ENCODE measurements at regions of chr11 and their contacts with region 1.

Region 1: GRCh38 chr11:14454861-14455632 is 44.6 kb downstream of the COPB1 start:
- DNase-seq: peak; percentile 60
- ATAC-seq: no peak
- H3K4me3 ChIP-seq: no peak overlapping the region
- H3K4me3 Mint-ChIP-seq: no peak overlapping the region
- H3K27ac ChIP-seq: no peak overlapping the region
- H3K27ac Mint-ChIP-seq: no peak overlapping the region
- H3K4me1 ChIP-seq: peaks cover 9 to 15% of the 10 kb centered on the region in 2 donors
- H3K4me1 Mint-ChIP-seq: peaks cover 24% of the 10 kb centered on the region
- H3K27me3 ChIP-seq: no peaks in the 10 kb centered on the region
- H3K27me3 Mint-ChIP-seq: no peaks in the 10 kb centered on the region
- CTCF ChIP-seq: peak; percentile 88

Region 2: DNA sequence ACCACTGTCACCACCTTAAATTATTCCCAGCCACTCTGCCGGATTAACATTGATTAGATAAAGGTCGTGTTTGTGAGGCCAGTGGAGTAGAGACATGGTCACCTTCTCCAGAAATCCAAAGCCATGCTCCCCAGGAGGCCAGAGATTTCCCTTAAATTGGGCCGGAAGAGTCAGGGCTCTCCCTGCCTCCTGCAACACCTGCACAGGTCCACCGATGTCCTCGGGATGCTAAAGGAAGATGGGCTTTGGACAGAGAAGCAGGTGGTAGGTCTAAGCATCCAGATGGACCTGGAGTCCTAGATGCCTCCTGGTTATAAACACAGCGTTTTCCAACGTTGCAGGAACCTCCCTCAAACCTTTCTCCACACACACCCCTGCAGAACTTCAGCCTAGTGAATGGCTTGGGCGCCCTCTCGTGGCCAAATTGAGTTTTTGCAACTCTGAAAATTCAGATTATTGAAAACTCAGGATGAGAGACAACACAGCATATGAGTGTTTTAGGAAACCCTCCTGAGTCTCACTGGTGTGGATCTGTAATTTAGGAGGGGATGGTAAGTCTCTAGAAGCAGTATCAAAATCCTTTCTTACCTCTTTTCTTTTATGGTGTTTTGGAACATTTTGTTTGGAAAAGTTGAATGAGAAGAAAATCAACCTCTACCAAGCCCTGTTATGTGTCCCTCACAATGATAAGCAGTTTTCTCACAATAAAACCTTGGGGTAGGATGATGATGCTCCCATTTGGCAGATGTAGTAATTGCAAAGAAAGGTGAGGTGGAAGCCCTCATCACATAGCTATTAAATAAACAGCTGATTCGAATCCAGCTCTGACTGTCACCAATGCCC is 205.7 kb before region 1 on chr11:
- CTCF ChIA-PET with region 1: interaction called, 14 read pairs
- POLR2A ChIA-PET with region 1: no interaction called
- intact Hi-C with region 1: no loop called
- DNase-seq: peak; percentile 77
- ATAC-seq: peak; percentile 53
- H3K4me3 ChIP-seq: peak overlapping the region in 2 of 5 experiments; percentile 27
- H3K4me3 Mint-ChIP-seq: peak overlapping the region; percentile 50
- H3K27ac ChIP-seq: no peak overlapping the region
- H3K27ac Mint-ChIP-seq: no peak overlapping the region
- H3K4me1 ChIP-seq: peaks cover 10 to 11% of the 10 kb centered on the region in 2 donors
- H3K4me1 Mint-ChIP-seq: peaks cover 19% of the 10 kb centered on the region
- H3K27me3 ChIP-seq: peaks cover 0 to 18% (median 7%) of the 10 kb centered on the region in 4 experiments
- H3K27me3 Mint-ChIP-seq: peaks cover 30% of the 10 kb centered on the region
- CTCF ChIP-seq: peak; percentile 98

Region 3: DNA sequence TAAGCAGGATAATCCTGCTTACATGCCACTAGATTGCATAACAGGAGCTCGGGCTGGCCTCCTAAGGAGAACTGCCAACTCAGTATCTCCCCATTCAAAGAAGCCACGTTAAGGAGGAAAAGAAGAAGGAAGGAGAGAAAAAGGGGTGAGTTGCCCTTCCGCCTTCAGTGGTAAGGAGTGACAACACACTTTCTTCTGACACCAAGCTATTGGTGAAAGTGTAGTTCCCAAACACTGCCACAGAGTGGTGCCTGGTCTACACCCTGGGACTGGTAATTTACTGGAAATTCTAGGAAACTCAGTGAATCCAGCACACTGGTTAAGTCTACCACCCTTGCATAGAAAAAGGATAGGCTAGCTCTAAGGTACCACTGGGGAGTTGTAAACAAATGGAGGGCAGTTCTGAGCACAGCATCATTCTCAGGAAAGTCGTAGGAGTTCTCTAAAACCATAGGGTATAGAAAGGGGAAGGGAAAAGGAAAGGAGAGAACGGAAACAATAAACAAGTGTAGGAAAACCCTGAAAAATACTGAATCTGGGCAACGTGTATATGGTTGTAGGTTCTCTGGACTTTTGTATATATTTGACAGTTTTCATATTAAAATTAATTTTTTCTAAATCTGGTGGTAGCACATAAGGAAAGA is 154.3 kb before region 1 on chr11:
- CTCF ChIA-PET with region 1: interaction called, 474 read pairs
- POLR2A ChIA-PET with region 1: interaction called, 4 read pairs
- intact Hi-C with region 1: loop called (anchors 1 kb)
- DNase-seq: peak; percentile 75
- ATAC-seq: peak; percentile 93
- H3K4me3 ChIP-seq: no peak overlapping the region
- H3K4me3 Mint-ChIP-seq: no peak overlapping the region
- H3K27ac ChIP-seq: no peak overlapping the region
- H3K27ac Mint-ChIP-seq: no peak overlapping the region
- H3K4me1 ChIP-seq: peaks cover 45 to 64% of the 10 kb centered on the region in 2 donors
- H3K4me1 Mint-ChIP-seq: peaks cover 59% of the 10 kb centered on the region
- H3K27me3 ChIP-seq: no peaks in the 10 kb centered on the region
- H3K27me3 Mint-ChIP-seq: no peaks in the 10 kb centered on the region
- CTCF ChIP-seq: peak; percentile 80

Region 4: DNA sequence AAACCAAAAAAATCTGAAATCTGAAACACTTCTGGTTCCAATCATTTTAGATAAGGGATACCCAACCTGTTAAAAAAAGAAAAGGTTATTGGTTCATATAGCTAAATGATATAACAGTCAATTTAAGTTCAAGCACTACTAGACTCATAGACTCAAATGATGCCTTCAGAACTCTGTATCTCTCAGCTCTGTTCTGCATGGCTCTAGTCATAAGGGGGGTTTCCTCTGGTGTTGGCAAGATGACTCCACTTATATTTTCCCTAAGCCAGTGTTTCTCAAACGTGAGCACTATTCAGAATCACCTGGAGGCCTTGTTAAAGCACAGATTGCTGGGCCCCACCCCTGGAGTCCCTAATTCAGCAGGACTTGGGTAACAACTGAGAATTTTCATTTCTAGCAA is 84.6 kb before region 1 on chr11:
- CTCF ChIA-PET with region 1: interaction called, 14 read pairs
- POLR2A ChIA-PET with region 1: no interaction called
- intact Hi-C with region 1: no loop called
- DNase-seq: no peak
- ATAC-seq: no peak
- H3K4me3 ChIP-seq: no peak overlapping the region
- H3K4me3 Mint-ChIP-seq: no peak overlapping the region
- H3K27ac ChIP-seq: no peak overlapping the region
- H3K27ac Mint-ChIP-seq: no peak overlapping the region
- H3K4me1 ChIP-seq: peaks cover 18 to 20% of the 10 kb centered on the region in 2 donors
- H3K4me1 Mint-ChIP-seq: peaks cover 30% of the 10 kb centered on the region
- H3K27me3 ChIP-seq: no peaks in the 10 kb centered on the region
- H3K27me3 Mint-ChIP-seq: no peaks in the 10 kb centered on the region
- CTCF ChIP-seq: no peak

Region 5: DNA sequence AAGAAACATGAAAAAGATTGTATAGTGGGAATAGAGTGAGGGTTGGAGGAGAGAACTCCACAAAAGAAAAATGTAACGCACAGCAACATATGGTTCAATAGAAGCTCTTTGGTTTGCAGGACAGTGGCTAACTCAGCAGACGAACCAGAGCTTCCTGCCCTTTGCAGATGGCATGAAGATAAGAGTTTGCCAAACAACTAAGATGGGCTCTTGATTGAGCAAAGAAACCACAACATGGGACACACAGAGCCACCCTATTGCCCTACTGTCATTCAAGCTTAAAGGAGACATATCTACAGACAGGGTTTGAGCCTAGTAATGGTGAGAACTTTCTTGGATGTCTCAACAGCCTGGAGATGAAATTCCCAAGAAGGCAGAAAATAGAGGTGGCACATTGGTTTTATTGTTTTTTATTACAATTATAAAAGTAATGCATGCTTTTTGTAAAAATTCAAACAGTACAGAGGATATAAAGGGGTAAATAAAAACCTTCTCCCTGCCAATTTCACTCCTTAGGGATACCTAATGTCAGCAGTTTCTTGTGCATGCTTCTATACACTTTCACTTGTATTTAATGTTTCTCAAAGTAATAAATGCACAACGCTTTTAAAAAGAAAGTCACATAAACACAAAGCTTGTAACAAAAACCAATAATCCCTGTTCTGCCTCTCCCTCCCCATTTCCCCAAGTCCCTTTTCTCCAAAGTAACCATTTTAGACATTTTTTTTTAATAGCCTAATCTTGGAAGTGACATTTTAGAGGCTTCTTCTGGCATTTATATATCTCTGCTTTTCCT is 19.1 kb before region 1 on chr11:
- CTCF ChIA-PET with region 1: interaction called, 10 read pairs
- POLR2A ChIA-PET with region 1: no interaction called
- intact Hi-C with region 1: no loop called
- DNase-seq: no peak
- ATAC-seq: no peak
- H3K4me3 ChIP-seq: no peak overlapping the region
- H3K4me3 Mint-ChIP-seq: no peak overlapping the region
- H3K27ac ChIP-seq: no peak overlapping the region
- H3K27ac Mint-ChIP-seq: no peak overlapping the region
- H3K4me1 ChIP-seq: peaks cover 11% of the 10 kb centered on the region in 2 donors
- H3K4me1 Mint-ChIP-seq: peaks cover 24% of the 10 kb centered on the region
- H3K27me3 ChIP-seq: no peaks in the 10 kb centered on the region
- H3K27me3 Mint-ChIP-seq: no peaks in the 10 kb centered on the region
- CTCF ChIP-seq: no peak

Region 6: GRCh38 chr11:14499554-14500180 is 44.6 kb after region 1 on chr11 and contains the start of gene COPB1:
- CTCF ChIA-PET with region 1: interaction called, 5 read pairs
- POLR2A ChIA-PET with region 1: no interaction called
- intact Hi-C with region 1: loop called (anchors 5 kb)
- DNase-seq: peak; percentile 95
- ATAC-seq: peak; percentile 96
- H3K4me3 ChIP-seq: peak within 1 kb of the TSS; percentile 75 to 91 (median 86)
- H3K4me3 Mint-ChIP-seq: peak within 1 kb of the TSS; percentile 97
- H3K27ac ChIP-seq: peak within 1 kb of the TSS; percentile 76 to 85
- H3K27ac Mint-ChIP-seq: peak within 1 kb of the TSS; percentile 94
- H3K4me1 ChIP-seq: peaks cover 6 to 10% of the 10 kb centered on the region in 2 donors
- H3K4me1 Mint-ChIP-seq: peaks cover 36% of the 10 kb centered on the region
- H3K27me3 ChIP-seq: no peaks in the 10 kb centered on the region
- H3K27me3 Mint-ChIP-seq: no peaks in the 10 kb centered on the region
- CTCF ChIP-seq: no peak
- total RNA-seq, gene COPB1: 80.2 and 87.6 TPM in 2 replicates

Measured in B cell (primary cell).